AG04450 (cell line): ENCODE measurements at regions of chr2 and their contacts with region 1.

Region 1: DNA sequence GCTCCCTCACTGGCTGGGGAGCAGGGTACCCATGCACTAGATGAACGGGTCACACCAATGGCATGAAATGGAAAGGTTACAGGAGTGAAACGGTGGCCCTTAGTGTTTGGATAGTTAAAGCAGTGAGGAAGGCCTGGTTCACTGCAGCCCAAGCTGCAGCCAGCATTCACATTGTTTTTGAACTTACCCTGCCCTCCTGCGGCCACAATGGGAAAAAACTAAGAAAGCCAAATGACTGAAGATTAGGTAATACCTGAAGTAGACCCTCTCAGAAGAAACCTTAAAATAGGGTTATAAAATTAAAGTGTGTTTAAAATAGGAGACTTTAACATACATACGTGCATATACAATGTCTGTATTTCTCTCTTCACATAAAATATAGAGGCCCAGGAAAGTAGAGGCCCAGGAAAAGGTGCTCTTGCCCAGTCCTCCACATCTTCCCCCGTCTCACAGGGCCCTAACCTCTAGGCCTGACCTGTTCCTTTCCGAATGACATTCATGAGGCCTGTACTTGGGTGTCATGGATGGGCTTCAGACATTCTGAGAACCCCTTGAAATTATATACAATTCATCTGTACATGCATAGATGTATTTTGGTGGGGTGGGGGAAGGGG is 33.3 kb downstream of the DOK1 start:
- DNase-seq: no peak
- H3K4me3 ChIP-seq: no peak overlapping the region
- H3K27ac ChIP-seq: no peak overlapping the region
- H3K27me3 ChIP-seq: peaks cover 14% of the 10 kb centered on the region
- CTCF ChIP-seq: peak; percentile 76

Region 2: GRCh38 chr2:74529357-74530238 is 58.2 kb before region 1 on chr2 and contains the starts of genes AUP1 and HTRA2:
- CTCF ChIA-PET with region 1: interaction called, 42 read pairs
- POLR2A ChIA-PET with region 1: interaction called, 5 read pairs
- DNase-seq: peak; percentile 98
- H3K4me3 ChIP-seq: peak within 1 kb of the TSS; percentile 100
- H3K27ac ChIP-seq: peak within 1 kb of the TSS; percentile 77
- H3K27me3 ChIP-seq: no peaks in the 10 kb centered on the region
- CTCF ChIP-seq: no peak
- polyA plus RNA-seq, gene AUP1: 51.9 and 64.4 TPM in 2 replicates
- polyA plus RNA-seq, gene HTRA2: 20.2 and 22.4 TPM in 2 replicates

Region 3: DNA sequence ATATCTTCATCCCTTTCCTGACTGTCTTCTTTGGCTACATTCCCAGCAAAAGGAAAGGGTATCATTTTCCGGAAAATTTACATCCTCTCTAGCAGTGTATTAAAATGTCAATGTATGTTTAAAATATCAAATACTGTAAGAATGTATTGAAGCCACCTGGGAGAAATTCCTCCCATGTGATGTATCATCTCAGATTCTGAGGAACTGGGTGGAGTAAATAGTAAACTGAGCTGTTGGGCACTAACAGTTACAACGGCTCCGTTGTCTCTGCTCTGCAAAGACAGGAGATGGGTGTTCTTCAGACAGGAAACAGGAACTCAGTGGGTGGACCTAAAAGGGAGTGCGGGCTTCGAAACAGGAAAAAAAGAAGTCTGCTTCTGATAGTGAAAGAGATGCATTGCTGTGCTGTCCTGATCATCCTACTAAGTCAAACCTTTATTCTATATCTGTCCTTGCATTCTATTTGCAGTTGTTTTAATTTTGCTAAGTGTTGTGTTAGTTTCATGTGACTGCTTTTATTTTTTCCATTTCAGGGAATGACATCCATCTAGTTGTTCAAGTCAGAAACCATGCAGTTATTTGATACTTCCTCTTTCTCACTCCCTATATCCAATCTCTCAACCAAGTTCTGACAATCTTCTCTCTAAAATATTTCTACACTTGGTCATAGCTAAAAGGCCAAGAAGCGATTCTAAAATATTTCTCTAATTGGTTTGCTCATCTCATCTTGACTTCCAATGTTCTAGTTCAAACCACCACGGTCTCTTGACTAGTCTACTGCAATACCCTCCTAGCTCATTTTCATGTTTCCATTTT is 13.8 kb before region 1 on chr2:
- CTCF ChIA-PET with region 1: interaction called, 27 read pairs
- POLR2A ChIA-PET with region 1: interaction called, 8 read pairs
- DNase-seq: peak; percentile 68
- H3K4me3 ChIP-seq: peak overlapping the region; percentile 14; the same call in 1 of the 2 replicates
- H3K27ac ChIP-seq: peak overlapping the region; percentile 49
- H3K27me3 ChIP-seq: no peaks in the 10 kb centered on the region
- CTCF ChIP-seq: no peak

Region 4: GRCh38 chr2:74602586-74603281 is 15.0 kb after region 1 on chr2:
- CTCF ChIA-PET with region 1: interaction called, 19 read pairs
- POLR2A ChIA-PET with region 1: no interaction called
- DNase-seq: no peak
- H3K4me3 ChIP-seq: no peak overlapping the region
- H3K27ac ChIP-seq: no peak overlapping the region
- H3K27me3 ChIP-seq: peaks cover 19% of the 10 kb centered on the region
- CTCF ChIP-seq: no peak

Region 5: GRCh38 chr2:74617122-74617521 is 29.4 kb after region 1 on chr2:
- CTCF ChIA-PET with region 1: no interaction called
- POLR2A ChIA-PET with region 1: no interaction called
- DNase-seq: no peak
- H3K4me3 ChIP-seq: no peak overlapping the region
- H3K27ac ChIP-seq: no peak overlapping the region
- H3K27me3 ChIP-seq: peaks cover 43% of the 10 kb centered on the region
- CTCF ChIP-seq: no peak

Region 6: GRCh38 chr2:74991977-74992376 is 404.2 kb after region 1 on chr2:
- CTCF ChIA-PET with region 1: no interaction called
- POLR2A ChIA-PET with region 1: no interaction called
- DNase-seq: no peak
- H3K4me3 ChIP-seq: no peak overlapping the region
- H3K27ac ChIP-seq: no peak overlapping the region
- H3K27me3 ChIP-seq: no peaks in the 10 kb centered on the region
- CTCF ChIP-seq: no peak